Esophagus muscularis mucosa (tissue), 4 donors: ENCODE measurements at regions of chr4 and their contacts with region 1.

Region 1: DNA sequence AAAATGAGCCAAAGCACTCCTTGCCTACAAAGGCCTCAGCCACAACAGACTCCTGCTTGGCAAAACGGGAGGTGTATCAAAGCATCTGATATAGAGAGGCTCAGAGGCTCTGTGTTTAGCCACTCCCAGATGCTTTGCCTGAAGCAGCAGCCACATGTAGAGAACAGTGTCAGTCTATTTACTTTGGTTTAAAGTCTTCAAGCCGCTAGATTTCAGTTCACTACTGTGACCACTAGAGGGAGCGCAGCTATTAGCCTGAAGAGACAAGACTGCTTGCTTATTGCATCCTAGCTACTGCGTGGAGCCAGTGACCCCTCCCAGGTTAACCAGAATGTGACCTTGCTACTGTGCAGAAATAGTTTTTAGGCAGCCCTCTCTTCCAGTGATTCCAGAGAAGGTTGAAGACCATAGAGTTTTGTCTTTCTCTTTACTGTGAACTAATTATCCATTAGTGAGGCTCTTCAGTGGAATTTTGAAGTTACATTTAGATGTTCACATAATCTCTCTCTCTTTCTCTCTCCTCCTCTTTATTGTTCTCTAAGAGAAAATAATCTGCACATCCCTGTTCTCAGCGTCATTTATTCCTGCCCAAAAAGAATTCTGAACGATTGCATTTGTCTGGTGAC is 39.3 kb downstream of the BMP3 start:
- DNase-seq: no peak
- H3K4me3 ChIP-seq: no peak overlapping the region
- H3K27ac ChIP-seq: no peak overlapping the region
- H3K4me1 ChIP-seq: peaks cover 0 to 5% (median 3%) of the 10 kb centered on the region in 4 donors
- H3K27me3 ChIP-seq: no peaks in the 10 kb centered on the region
- CTCF ChIP-seq: peak; percentile 85 to 91 (median 90)
- EP300 ChIP-seq: no peak
- POLR2A ChIP-seq: no peak

Region 2: GRCh38 chr4:80980239-80980638 is 89.6 kb before region 1 on chr4:
- intact Hi-C with region 1: no loop called
- DNase-seq: no peak
- H3K4me3 ChIP-seq: no peak overlapping the region
- H3K27ac ChIP-seq: no peak overlapping the region
- H3K4me1 ChIP-seq: no peaks in the 10 kb centered on the region
- H3K27me3 ChIP-seq: no peaks in the 10 kb centered on the region
- CTCF ChIP-seq: no peak
- EP300 ChIP-seq: no peak
- POLR2A ChIP-seq: no peak

Region 3: DNA sequence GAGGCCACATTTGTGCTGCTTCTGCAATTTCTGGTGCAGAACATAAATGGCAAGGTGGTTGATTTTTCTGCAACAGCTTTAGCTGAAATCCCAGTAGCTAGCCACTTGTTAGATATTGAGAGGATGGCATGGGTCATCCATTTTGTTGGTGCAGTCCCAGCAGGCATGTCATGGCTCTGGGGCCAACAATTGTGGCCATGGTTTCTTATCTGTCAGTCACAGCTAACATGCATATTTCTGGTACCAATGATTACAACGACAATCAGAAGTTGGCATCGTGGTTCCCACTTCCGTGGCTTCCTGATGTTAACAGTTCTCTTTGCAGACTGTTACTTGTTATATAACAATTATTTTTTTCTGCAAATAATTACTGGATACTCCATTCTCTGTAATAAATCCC is 188.0 kb after region 1 on chr4:
- intact Hi-C with region 1: loop called (anchors 2 kb)
- DNase-seq: no peak
- H3K4me3 ChIP-seq: no peak overlapping the region
- H3K27ac ChIP-seq: no peak overlapping the region
- H3K4me1 ChIP-seq: no peaks in the 10 kb centered on the region
- H3K27me3 ChIP-seq: no peaks in the 10 kb centered on the region
- CTCF ChIP-seq: no peak
- EP300 ChIP-seq: no peak
- POLR2A ChIP-seq: no peak

Region 4: DNA sequence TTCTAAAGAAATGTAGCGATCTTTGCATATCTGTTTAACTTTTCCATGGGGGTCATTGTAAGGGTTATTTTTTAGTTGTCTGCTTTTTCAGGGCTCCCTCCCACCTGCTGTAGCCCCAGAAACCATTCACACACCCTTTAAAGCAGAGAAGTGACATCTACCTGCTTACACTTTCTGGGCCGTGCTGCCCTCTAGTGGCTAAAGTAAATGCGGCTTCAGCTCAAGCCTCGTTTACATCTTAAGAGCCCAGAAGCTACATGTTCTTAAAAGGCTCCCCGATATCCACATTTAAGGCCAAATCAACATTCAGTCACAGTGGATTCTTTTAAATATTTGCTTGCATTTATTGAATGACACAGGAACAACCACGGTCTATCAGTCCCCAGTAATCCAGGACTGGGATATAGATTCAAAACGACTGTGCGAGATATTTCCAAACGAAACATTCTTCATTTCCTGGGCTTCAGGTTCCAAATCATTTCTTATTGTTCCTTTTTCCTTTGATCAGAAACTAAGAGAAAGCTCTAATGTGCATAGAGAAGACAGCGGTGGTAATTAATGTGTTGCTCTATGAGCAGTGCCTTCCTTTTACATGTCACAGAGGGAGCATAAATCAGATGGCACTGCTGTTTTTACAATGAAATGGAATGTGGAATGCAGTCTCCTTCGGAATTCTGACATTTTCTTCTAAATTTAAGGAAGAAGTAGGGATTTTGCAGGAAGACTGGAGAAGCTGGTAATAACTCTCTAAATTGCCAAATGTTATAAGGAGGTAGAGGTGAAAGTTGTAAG is 282.0 kb after region 1 on chr4:
- intact Hi-C with region 1: loop called (anchors 2 kb)
- DNase-seq: no peak
- H3K4me3 ChIP-seq: no peak overlapping the region
- H3K27ac ChIP-seq: no peak overlapping the region
- H3K4me1 ChIP-seq: no peaks in the 10 kb centered on the region
- H3K27me3 ChIP-seq: no peaks in the 10 kb centered on the region
- CTCF ChIP-seq: peak; percentile 65 to 89 (median 84)
- EP300 ChIP-seq: no peak
- POLR2A ChIP-seq: no peak